ENCODE measurements at regions of chr12 and their contacts with region 1.

Region 1: GRCh38 chr12:117236456-117237001 is 46.3 kb upstream of the FBXO21 start:
- DNase-seq: peak; percentile 88 to 100
- H3K4me3 ChIP-seq: peak overlapping the region in 1 of 4 experiments; percentile 27; a peak in 1 of 8 replicates
- H3K27ac ChIP-seq: no peak overlapping the region; the same call in 1 of the 2 replicates
- H3K4me1 ChIP-seq: peaks cover 6 to 11% (median 9%) of the 10 kb centered on the region in 4 experiments; a peak in 4 of 7 replicates
- H3K27me3 ChIP-seq: no peaks in the 10 kb centered on the region
- CTCF ChIP-seq: peak; percentile 67 to 82 (median 72)
- EP300 ChIP-seq: peak in 1 of 2 experiments; percentile 20; a peak in 1 of 3 replicates
- POLR2A ChIP-seq: peak; percentile 22 to 82
- RAD21 ChIP-seq: peak; percentile 75 to 85

Region 2: GRCh38 chr12:117212563-117213190 is 23.9 kb before region 1 on chr12:
- CTCF ChIA-PET with region 1: interaction called, 65 read pairs
- POLR2A ChIA-PET with region 1: no interaction called
- DNase-seq: peak; percentile 34 to 88
- H3K4me3 ChIP-seq: no peak overlapping the region
- H3K27ac ChIP-seq: no peak overlapping the region
- H3K4me1 ChIP-seq: peaks cover 0 to 4% (median 2%) of the 10 kb centered on the region in 4 experiments; a peak in 2 of 7 replicates
- H3K27me3 ChIP-seq: no peaks in the 10 kb centered on the region
- CTCF ChIP-seq: peak; percentile 66 to 92 (median 87)
- EP300 ChIP-seq: no peak
- POLR2A ChIP-seq: no peak
- RAD21 ChIP-seq: peak; percentile 97 to 98

Region 3: DNA sequence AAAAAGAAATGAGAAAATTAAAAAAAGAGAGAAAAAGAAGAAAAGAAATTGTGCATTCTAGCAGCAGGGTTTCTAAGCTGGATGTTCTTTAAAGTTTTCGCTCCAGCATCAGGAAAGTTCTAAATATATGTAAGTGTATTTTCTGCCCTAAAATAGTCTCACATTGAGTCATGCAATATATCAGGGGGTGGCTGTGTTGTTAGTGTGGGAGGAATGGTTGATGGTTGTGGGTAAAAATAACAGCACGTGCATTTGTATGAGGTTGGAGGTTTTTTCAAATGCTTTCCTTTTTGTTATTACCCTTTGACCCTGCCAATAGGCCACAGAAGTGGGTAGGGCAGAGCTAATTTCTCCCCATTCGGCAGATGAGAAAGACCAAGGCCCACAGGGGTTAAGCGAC is 18.9 kb after region 1 on chr12:
- CTCF ChIA-PET with region 1: interaction called, 10 read pairs
- POLR2A ChIA-PET with region 1: no interaction called
- DNase-seq: no peak
- H3K4me3 ChIP-seq: no peak overlapping the region
- H3K27ac ChIP-seq: no peak overlapping the region
- H3K4me1 ChIP-seq: no peaks in the 10 kb centered on the region
- H3K27me3 ChIP-seq: no peaks in the 10 kb centered on the region
- CTCF ChIP-seq: no peak
- EP300 ChIP-seq: no peak
- POLR2A ChIP-seq: no peak
- RAD21 ChIP-seq: no peak

Region 4: GRCh38 chr12:117360551-117361346 is 124.2 kb after region 1 on chr12:
- CTCF ChIA-PET with region 1: interaction called, 33 read pairs
- POLR2A ChIA-PET with region 1: no interaction called
- DNase-seq: peak in 1 of 2 experiments; percentile 81
- H3K4me3 ChIP-seq: peak overlapping the region; percentile 71 to 84 (median 80)
- H3K27ac ChIP-seq: no peak overlapping the region
- H3K4me1 ChIP-seq: peaks cover 0 to 3% (median 2%) of the 10 kb centered on the region in 4 experiments; a peak in 3 of 7 replicates
- H3K27me3 ChIP-seq: peaks cover 27 to 73% (median 59%) of the 10 kb centered on the region in 4 experiments
- CTCF ChIP-seq: no peak
- EP300 ChIP-seq: no peak
- POLR2A ChIP-seq: no peak
- RAD21 ChIP-seq: no peak

Region 5: DNA sequence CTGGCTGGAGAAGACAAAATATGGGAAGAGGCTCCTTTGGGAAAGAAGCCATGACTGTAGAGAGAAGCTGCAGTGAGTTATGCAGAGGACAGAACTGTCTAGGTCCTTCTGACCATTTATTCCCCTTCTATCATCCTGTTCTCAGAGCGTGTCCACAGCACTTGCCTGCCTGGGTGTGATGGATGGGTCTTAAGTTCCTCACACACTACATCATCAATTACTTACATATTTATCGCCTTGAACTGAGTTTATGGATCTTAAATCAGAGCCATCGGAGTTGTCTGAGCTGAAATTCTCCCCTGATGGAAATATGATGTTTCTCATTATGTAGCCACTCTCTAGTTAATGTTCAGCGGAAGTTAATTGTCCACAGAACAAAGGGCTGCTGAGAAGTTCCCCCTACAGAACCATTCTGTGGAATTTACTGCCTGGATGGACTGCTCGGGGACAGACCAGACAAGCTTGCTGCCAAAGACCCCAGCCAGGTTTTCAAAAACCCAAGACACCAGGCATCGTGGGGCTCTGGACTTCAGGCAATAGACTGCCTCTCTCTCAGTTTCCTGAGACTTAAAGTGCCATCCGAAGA is 357.4 kb after region 1 on chr12:
- CTCF ChIA-PET with region 1: interaction called, 18 read pairs
- POLR2A ChIA-PET with region 1: no interaction called
- DNase-seq: no peak
- H3K4me3 ChIP-seq: no peak overlapping the region
- H3K27ac ChIP-seq: no peak overlapping the region
- H3K4me1 ChIP-seq: peaks cover 0 to 4% (median 2%) of the 10 kb centered on the region in 4 experiments; a peak in 4 of 7 replicates
- H3K27me3 ChIP-seq: no peaks in the 10 kb centered on the region
- CTCF ChIP-seq: no peak
- EP300 ChIP-seq: no peak
- POLR2A ChIP-seq: no peak
- RAD21 ChIP-seq: no peak

Measured in H1 (cell line).